ENCODE measurements at regions of chr3 and their contacts with region 1.

Region 1: DNA sequence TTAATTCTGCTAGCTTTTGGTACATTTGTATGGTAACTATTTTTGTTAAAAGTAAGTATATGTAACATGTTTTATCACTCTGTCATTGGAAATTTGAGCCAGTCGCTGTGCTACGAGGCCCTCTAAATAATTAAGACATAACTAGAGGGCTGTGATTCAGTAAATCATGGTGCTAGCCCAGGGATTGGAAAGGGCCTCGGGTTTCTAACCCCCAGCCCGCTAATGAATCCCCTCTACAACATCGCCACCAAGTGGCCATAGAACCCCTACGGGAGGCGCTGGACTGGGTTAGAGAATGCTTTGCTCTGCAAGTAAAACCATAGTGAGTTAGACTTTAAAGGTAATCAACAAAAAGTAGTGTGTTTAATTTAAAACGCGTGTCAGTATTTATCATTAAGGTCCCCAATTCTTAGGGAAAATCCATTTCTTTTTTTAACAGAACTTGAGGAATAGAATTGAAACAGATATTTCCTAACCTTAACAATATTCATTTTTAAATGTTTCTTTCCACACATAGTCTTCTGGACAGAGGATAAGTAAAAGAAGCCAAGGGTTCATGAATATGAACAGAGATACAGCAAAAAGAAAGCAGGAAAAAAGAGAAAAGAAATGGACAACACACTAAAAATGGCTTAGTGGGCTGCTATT is 744.7 kb downstream of the EPHA3 start:
- DNase-seq: peak; percentile 92
- H3K4me3 ChIP-seq: no peak overlapping the region
- H3K27ac ChIP-seq: no peak overlapping the region
- H3K4me1 ChIP-seq: peaks cover 10% of the 10 kb centered on the region
- H3K27me3 ChIP-seq: no peaks in the 10 kb centered on the region
- CTCF ChIP-seq: peak; percentile 95

Region 2: GRCh38 chr3:88707837-88708236 is 1144.3 kb before region 1 on chr3:
- CTCF ChIA-PET with region 1: no interaction called
- POLR2A ChIA-PET with region 1: no interaction called
- intact Hi-C with region 1: loop called (anchors 10 kb)
- DNase-seq: no peak
- H3K4me3 ChIP-seq: no peak overlapping the region
- H3K27ac ChIP-seq: no peak overlapping the region
- H3K4me1 ChIP-seq: peaks cover 23% of the 10 kb centered on the region
- H3K27me3 ChIP-seq: no peaks in the 10 kb centered on the region
- CTCF ChIP-seq: no peak

Region 3: GRCh38 chr3:89571707-89572106 is 280.4 kb before region 1 on chr3:
- CTCF ChIA-PET with region 1: no interaction called
- POLR2A ChIA-PET with region 1: no interaction called
- intact Hi-C with region 1: loop called (anchors 10 kb)
- DNase-seq: no peak
- H3K4me3 ChIP-seq: no peak overlapping the region
- H3K27ac ChIP-seq: no peak overlapping the region
- H3K4me1 ChIP-seq: peaks cover 13% of the 10 kb centered on the region
- H3K27me3 ChIP-seq: no peaks in the 10 kb centered on the region
- CTCF ChIP-seq: no peak

Region 4: GRCh38 chr3:89787485-89787884 is 64.6 kb before region 1 on chr3:
- CTCF ChIA-PET with region 1: no interaction called
- POLR2A ChIA-PET with region 1: no interaction called
- intact Hi-C with region 1: loop called (anchors 10 kb)
- DNase-seq: peak; percentile 37
- H3K4me3 ChIP-seq: no peak overlapping the region
- H3K27ac ChIP-seq: no peak overlapping the region
- H3K4me1 ChIP-seq: peaks cover 6% of the 10 kb centered on the region
- H3K27me3 ChIP-seq: no peaks in the 10 kb centered on the region
- CTCF ChIP-seq: no peak